OCI-LY7 (cell line): ENCODE measurements at regions of chr17 and their contacts with region 1.

Region 1: GRCh38 chr17:77957857-77958715 is at the start of gene TNRC6C:
- DNase-seq: peak; percentile 100
- H3K4me3 ChIP-seq: peak within 1 kb of the TSS; percentile 85
- H3K27ac ChIP-seq: peak within 1 kb of the TSS; percentile 42
- H3K4me1 ChIP-seq: peaks cover 33% of the 10 kb centered on the region
- CTCF ChIP-seq: peak; percentile 40; the same call in 1 of the 2 replicates
- total RNA-seq, gene TNRC6C: 8.5 and 14.2 TPM in 2 replicates

Region 2: GRCh38 chr17:77666881-77667395 is 291.1 kb before region 1 on chr17:
- CTCF ChIA-PET with region 1: no interaction called
- POLR2A ChIA-PET with region 1: interaction called, 16 read pairs
- intact Hi-C with region 1: no loop called
- DNase-seq: peak; percentile 87
- H3K4me3 ChIP-seq: peak overlapping the region; percentile 70
- H3K27ac ChIP-seq: peak overlapping the region; percentile 84
- H3K4me1 ChIP-seq: peaks cover 24% of the 10 kb centered on the region
- CTCF ChIP-seq: no peak

Region 3: GRCh38 chr17:77869665-77870132 is 88.4 kb before region 1 on chr17:
- CTCF ChIA-PET with region 1: no interaction called
- POLR2A ChIA-PET with region 1: interaction called, 27 read pairs
- intact Hi-C with region 1: loop called (anchors 1 kb)
- DNase-seq: peak; percentile 97
- H3K4me3 ChIP-seq: peak overlapping the region; percentile 61
- H3K27ac ChIP-seq: peak overlapping the region; percentile 86
- H3K4me1 ChIP-seq: peaks cover 83% of the 10 kb centered on the region
- CTCF ChIP-seq: no peak

Region 4: DNA sequence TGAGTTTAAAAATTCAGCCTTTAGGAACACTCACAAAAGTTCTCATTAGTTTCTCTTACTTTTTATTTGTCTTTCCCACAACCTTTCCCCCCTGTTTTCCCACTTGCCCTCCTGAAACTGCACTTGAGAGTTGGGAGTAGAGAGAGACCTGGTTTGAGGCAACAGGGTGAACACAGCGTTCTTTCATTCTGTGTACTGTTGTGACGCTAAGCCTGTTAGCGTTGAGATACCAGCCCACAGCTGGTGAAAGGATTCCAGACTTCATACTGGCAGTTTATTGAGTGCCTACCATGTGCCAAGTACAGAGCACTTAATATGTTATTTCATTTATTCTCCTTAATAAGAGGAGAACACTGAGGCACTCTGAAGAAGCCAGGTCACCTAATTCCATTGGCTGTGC is 10.7 kb after region 1 on chr17:
- CTCF ChIA-PET with region 1: interaction called, 6 read pairs
- POLR2A ChIA-PET with region 1: interaction called, 22 read pairs
- intact Hi-C with region 1: no loop called
- DNase-seq: no peak
- H3K4me3 ChIP-seq: no peak overlapping the region
- H3K27ac ChIP-seq: no peak overlapping the region
- H3K4me1 ChIP-seq: no peaks in the 10 kb centered on the region
- CTCF ChIP-seq: no peak

Region 5: GRCh38 chr17:78005452-78006171 is 47.5 kb after region 1 on chr17:
- CTCF ChIA-PET with region 1: no interaction called
- POLR2A ChIA-PET with region 1: interaction called, 11 read pairs
- intact Hi-C with region 1: no loop called
- DNase-seq: no peak
- H3K4me3 ChIP-seq: no peak overlapping the region
- H3K27ac ChIP-seq: no peak overlapping the region
- H3K4me1 ChIP-seq: peaks cover 6% of the 10 kb centered on the region
- CTCF ChIP-seq: no peak

Region 6: DNA sequence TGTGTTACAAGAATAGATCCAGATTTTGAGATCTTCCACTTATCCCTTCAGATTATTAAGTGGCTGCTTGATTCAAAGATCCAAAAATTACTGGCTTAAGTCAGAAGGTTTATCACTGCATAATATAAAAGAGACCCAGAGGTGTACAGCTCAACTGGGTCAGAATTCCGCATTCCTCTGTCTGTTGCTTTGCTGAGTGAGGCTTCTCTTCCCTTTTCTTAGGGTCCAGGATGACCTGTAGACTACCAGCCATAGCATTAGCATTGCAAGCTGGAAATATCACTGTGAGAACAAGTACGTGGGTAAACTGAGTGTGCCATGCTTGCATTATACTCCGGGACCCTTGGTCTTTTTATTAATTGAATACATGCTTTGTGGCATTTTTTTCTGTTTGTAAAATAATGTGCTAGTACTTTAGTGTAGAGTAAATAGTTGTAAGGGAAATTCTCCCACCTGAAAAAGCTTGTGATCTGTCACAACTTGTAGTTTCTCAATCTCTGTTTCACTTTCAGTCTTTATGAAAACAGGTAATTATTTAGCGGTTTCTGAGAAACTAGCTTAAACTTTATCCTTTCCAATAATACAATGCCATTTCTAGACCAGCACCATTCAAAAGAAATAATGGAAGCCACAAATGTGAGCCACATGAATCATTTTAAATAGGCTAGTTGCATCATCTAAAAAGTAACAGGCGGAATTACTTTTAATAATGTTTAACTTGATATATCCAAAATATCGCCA is 62.1 kb after region 1 on chr17:
- CTCF ChIA-PET with region 1: no interaction called
- POLR2A ChIA-PET with region 1: no interaction called
- intact Hi-C with region 1: no loop called
- DNase-seq: no peak
- H3K4me3 ChIP-seq: no peak overlapping the region
- H3K27ac ChIP-seq: no peak overlapping the region
- H3K4me1 ChIP-seq: no peaks in the 10 kb centered on the region
- CTCF ChIP-seq: no peak

Region 7: DNA sequence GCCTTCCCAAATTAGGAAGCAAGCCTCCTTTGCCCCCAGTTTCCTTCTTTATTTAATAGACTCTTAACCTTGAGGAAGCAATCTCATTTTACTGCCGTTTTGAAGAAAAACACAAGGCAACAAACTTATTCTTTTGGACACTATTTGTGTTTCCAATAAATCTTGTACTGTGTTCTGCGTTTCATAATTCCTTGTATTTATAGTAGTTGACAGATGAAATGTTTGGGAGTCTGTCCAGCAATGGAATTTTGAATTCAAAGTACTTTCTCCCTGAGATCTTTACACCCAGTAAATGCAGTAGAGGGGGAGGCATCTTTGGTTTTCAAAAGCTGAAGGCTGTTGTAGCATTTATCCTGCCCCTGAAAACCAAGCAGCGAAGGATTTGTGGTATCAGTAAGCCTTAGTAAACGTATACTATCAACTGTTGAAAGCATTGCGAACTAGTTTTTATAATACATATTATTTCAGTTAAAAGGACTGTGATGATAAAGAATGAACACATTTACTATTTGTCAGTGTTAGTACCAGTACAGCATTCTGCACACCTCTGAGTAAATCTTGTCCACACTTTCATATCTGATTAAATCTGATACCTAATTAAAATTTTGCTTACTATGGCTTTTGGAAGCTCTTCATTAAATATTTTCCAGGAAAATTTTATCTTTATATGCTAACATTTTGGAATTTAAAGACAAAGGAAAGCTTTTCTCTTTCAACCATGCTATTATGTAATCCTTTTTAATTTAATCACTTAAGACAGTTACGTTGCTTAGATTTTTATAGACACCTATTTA is 83.5 kb after region 1 on chr17:
- CTCF ChIA-PET with region 1: no interaction called
- POLR2A ChIA-PET with region 1: no interaction called
- intact Hi-C with region 1: no loop called
- DNase-seq: no peak
- H3K4me3 ChIP-seq: no peak overlapping the region
- H3K27ac ChIP-seq: no peak overlapping the region
- H3K4me1 ChIP-seq: no peaks in the 10 kb centered on the region
- CTCF ChIP-seq: no peak